Heart right ventricle (tissue), 16 donors: ENCODE measurements at regions of chr14 and their contacts with region 1.

Region 1: DNA sequence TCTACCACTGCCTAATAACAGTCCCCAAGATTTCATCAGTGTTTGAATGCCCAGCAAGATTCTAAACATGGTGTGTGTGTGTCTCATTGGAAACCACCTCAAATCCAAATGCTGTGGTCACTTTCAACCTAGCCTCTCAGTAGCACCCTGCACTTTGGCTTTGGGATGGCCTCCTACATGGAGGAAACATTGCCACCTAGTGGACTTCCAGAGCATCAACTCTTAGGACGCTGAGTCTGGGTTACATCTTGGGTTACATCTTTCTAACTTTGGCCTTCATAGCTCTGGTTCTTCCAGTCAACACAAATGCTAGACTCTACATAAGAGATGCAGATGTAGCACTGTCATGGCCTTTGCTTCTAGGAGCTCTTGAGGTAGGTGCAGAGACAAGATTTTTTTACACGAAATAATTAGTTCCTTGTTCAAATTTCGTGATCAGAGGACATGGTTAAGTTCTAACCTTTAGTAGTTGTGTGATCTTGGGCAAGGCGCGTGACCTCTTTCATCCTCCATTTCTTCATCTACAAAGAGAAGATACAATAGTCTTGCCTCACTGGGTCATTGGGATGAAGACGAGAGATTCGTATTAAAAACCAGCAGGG is 113.5 kb upstream of the VASH1 start:
- DNase-seq: no peak
- ATAC-seq: peak in 5 of 8 donors; percentile 38 to 77 (median 54)
- H3K4me3 ChIP-seq: no peak overlapping the region
- H3K27ac ChIP-seq: no peak overlapping the region
- H3K4me1 ChIP-seq: peaks cover 0 to 4% (median 0%) of the 10 kb centered on the region in 9 donors
- H3K27me3 ChIP-seq: no peaks in the 10 kb centered on the region
- CTCF ChIP-seq: peak; percentile 54 to 90 (median 82)

Region 2: GRCh38 chr14:76050797-76051392 is 596.9 kb before region 1 on chr14:
- intact Hi-C with region 1: loop called (anchors 2 to 5 kb)
- DNase-seq: peak in 1 of 2 donors; percentile 65
- ATAC-seq: peak in 7 of 8 donors; percentile 46 to 87 (median 66)
- H3K4me3 ChIP-seq: no peak overlapping the region
- H3K27ac ChIP-seq: no peak overlapping the region
- H3K4me1 ChIP-seq: peaks cover 0 to 13% (median 0%) of the 10 kb centered on the region in 9 donors
- H3K27me3 ChIP-seq: no peaks in the 10 kb centered on the region
- CTCF ChIP-seq: peak; percentile 64 to 87 (median 76)

Region 3: DNA sequence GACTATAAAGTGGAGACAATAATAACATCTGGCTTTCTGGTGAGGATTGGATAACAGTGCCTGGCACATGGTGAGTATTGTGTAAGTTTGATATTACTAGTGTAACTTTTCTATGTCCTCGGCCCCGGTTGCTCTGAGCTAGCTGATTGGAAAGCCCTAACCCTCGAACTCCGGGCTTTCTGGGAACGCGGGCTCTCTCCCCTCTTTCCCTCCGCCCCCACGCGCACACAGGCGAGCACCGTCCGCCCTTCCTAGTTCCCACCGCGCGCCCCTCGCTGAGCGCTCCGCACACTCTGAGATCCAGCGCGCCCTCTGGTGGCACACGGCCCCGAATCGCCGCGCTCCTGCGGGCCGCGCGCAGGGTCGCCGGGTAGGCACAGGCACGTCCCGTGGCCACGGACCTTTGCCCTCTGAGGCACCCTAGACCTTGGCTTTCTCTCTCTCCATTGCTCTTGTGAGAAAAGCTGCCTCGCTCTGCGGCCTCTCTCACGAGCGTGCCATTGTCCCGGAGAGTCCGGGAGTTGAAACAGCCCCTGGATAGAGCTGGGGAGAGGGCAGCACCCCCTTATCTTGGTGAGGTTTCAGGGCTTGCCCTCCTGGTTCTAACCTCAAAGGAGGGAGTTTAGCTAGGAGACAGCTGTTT is 295.0 kb before region 1 on chr14:
- intact Hi-C with region 1: loop called in 1 of 10 experiments (anchors 10 kb)
- DNase-seq: peak; percentile 56 to 68
- ATAC-seq: peak; percentile 70 to 84 (median 76)
- H3K4me3 ChIP-seq: peak overlapping the region in 8 of 10 donors; percentile 9 to 40 (median 28)
- H3K27ac ChIP-seq: no peak overlapping the region
- H3K4me1 ChIP-seq: peaks cover 0 to 30% (median 14%) of the 10 kb centered on the region in 9 donors
- H3K27me3 ChIP-seq: peaks cover 0 to 14% (median 4%) of the 10 kb centered on the region in 7 donors
- CTCF ChIP-seq: peak; percentile 79 to 95 (median 90)

Region 4: GRCh38 chr14:76386915-76387782 is 260.6 kb before region 1 on chr14:
- intact Hi-C with region 1: loop called in 1 of 10 experiments (anchors 10 kb)
- DNase-seq: peak; percentile 63 to 64
- ATAC-seq: peak; percentile 51 to 90 (median 86)
- H3K4me3 ChIP-seq: no peak overlapping the region
- H3K27ac ChIP-seq: no peak overlapping the region
- H3K4me1 ChIP-seq: peaks cover 0 to 7% (median 0%) of the 10 kb centered on the region in 9 donors
- H3K27me3 ChIP-seq: peaks cover 0 to 47% (median 19%) of the 10 kb centered on the region in 7 donors
- CTCF ChIP-seq: peak; percentile 89 to 98 (median 96)

Region 5: DNA sequence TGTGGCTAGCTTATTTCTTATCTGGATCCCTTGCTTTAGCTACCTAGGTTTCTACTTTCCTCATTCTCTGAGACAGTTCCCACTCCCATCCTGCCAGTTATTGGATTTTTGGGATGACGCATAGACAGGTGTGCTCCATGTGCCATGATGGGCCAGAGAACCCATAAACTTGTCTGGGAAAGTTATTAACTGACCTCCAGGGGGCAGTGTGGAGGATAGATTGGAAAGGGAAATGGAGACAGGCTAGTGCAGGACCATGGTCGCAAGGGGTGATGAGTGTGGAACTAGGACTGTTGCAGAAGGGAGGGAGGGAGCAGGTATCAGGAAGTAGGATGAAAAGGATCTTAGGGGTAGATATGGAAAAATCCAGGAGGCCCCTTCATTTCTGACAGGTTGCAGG is 191.6 kb before region 1 on chr14:
- intact Hi-C with region 1: loop called (anchors 1 to 10 kb)
- DNase-seq: peak in 1 of 2 donors; percentile 47
- ATAC-seq: peak in 3 of 8 donors; percentile 37 to 55 (median 39)
- H3K4me3 ChIP-seq: no peak overlapping the region
- H3K27ac ChIP-seq: no peak overlapping the region
- H3K4me1 ChIP-seq: no peaks in the 10 kb centered on the region
- H3K27me3 ChIP-seq: no peaks in the 10 kb centered on the region
- CTCF ChIP-seq: peak; percentile 15 to 65 (median 57)

Region 6: GRCh38 chr14:76514613-76515012 is 133.2 kb before region 1 on chr14:
- intact Hi-C with region 1: loop called in 1 of 10 experiments (anchors 5 kb)
- DNase-seq: no peak
- ATAC-seq: no peak
- H3K4me3 ChIP-seq: no peak overlapping the region
- H3K27ac ChIP-seq: no peak overlapping the region
- H3K4me1 ChIP-seq: peaks cover 0 to 3% (median 0%) of the 10 kb centered on the region in 9 donors
- H3K27me3 ChIP-seq: peaks cover 0 to 6% (median 0%) of the 10 kb centered on the region in 7 donors
- CTCF ChIP-seq: peak in 3 of 9 donors; percentile 5 to 25 (median 21)